ENCODE measurements at regions of chr6 and their contacts with region 1.

Region 1: DNA sequence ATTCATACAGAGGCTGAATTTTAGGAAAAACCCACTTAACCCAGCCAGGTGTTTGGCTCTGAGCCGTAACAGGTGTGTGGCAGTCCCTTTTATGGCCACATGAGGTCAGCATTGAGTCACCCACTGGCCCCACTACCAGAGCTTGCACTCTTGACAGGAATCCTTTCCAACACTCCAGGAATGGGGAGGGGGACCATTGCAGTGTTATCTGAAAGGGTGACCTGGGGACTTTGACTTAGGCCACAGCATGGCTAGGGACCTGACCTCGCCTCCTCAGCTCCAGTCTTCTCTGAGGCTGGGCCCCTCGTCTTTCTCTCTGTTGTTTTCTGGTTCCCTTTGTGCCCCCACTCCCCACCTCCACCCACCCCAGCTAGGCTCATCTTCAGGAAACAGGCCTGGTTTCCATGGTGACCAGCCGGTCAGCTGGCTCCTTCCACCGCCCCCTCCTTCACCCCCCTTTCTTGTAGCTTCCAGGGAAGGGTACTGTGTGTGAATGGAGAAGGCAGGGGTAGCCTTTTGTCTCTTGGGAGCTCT is 2.1 kb upstream of the TMEM151B start:
- DNase-seq: no peak
- H3K4me3 ChIP-seq: no peak overlapping the region
- H3K27ac ChIP-seq: no peak overlapping the region
- H3K4me1 ChIP-seq: peaks cover 0 to 29% (median 26%) of the 10 kb centered on the region in 4 donors
- H3K27me3 ChIP-seq: peaks cover 21 to 54% (median 47%) of the 10 kb centered on the region in 3 donors
- CTCF ChIP-seq: peak; percentile 69 to 89 (median 82)
- EP300 ChIP-seq: no peak
- POLR2A ChIP-seq: no peak

Region 2: GRCh38 chr6:44312901-44313788 is 45.0 kb after region 1 on chr6 and contains the start of gene AARS2:
- intact Hi-C with region 1: loop called (anchors 2 kb)
- DNase-seq: peak; percentile 90
- H3K4me3 ChIP-seq: peak within 1 kb of the TSS; percentile 70 to 100 (median 93)
- H3K27ac ChIP-seq: peak within 1 kb of the TSS; percentile 77 to 88 (median 84)
- H3K4me1 ChIP-seq: peaks cover 0 to 17% (median 9%) of the 10 kb centered on the region in 4 donors
- H3K27me3 ChIP-seq: no peaks in the 10 kb centered on the region
- CTCF ChIP-seq: peak; percentile 74 to 97 (median 80)
- EP300 ChIP-seq: no peak
- POLR2A ChIP-seq: peak in 1 of 2 donors; percentile 41
- total RNA-seq, gene AARS2: 6.1 to 7.6 (median 6.8) TPM

Region 3: GRCh38 chr6:44338228-44339122 is 70.3 kb after region 1 on chr6:
- intact Hi-C with region 1: loop called (anchors 1 kb)
- DNase-seq: no peak
- H3K4me3 ChIP-seq: no peak overlapping the region
- H3K27ac ChIP-seq: peak overlapping the region in 1 of 4 donors; percentile 54
- H3K4me1 ChIP-seq: peaks cover 0 to 7% (median 3%) of the 10 kb centered on the region in 4 donors
- H3K27me3 ChIP-seq: peaks cover 6 to 23% (median 14%) of the 10 kb centered on the region in 3 donors
- CTCF ChIP-seq: peak; percentile 50 to 67 (median 60)
- EP300 ChIP-seq: no peak
- POLR2A ChIP-seq: no peak

Measured in sigmoid colon (tissue), 7 donors.